Common myeloid progenitor, CD34-positive (primary cell): ENCODE measurements at regions of chr5 and their contacts with region 1.

Region 1: GRCh38 chr5:93607367-93608258 is 24.6 kb downstream of the NR2F1 start:
- DNase-seq: peak; percentile 67 to 82 (median 80)
- H3K4me3 ChIP-seq: no peak overlapping the region
- H3K27ac ChIP-seq: no peak overlapping the region
- H3K4me1 ChIP-seq: no peaks in the 10 kb centered on the region
- H3K27me3 ChIP-seq: peaks cover 45 to 99% (median 79%) of the 10 kb centered on the region in 5 experiments

Region 2: DNA sequence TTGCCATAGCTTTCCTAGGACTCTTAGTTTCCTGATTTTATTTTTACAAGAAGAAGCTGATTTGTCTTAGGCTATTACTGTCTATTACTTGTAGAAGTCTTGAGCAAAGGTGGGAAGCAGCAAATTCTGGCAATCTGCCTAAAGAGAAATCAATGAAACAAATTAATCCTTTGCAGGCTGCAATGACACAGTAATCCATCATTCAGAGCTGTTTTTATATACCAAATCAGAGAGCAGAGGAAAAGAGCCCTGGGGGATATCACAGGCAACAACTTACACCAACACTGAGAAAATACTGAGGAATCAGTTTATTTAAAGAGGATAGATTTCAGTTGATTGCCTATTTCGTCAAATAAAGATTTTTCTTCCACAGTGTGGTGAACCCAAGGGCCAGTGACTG is 40.2 kb before region 1 on chr5:
- CTCF ChIA-PET with region 1: no interaction called
- POLR2A ChIA-PET with region 1: no interaction called
- DNase-seq: no peak
- H3K4me3 ChIP-seq: no peak overlapping the region
- H3K27ac ChIP-seq: no peak overlapping the region
- H3K4me1 ChIP-seq: peaks cover 0 to 19% (median 12%) of the 10 kb centered on the region in 4 experiments
- H3K27me3 ChIP-seq: peaks cover 34 to 74% (median 58%) of the 10 kb centered on the region in 5 experiments

Region 3: DNA sequence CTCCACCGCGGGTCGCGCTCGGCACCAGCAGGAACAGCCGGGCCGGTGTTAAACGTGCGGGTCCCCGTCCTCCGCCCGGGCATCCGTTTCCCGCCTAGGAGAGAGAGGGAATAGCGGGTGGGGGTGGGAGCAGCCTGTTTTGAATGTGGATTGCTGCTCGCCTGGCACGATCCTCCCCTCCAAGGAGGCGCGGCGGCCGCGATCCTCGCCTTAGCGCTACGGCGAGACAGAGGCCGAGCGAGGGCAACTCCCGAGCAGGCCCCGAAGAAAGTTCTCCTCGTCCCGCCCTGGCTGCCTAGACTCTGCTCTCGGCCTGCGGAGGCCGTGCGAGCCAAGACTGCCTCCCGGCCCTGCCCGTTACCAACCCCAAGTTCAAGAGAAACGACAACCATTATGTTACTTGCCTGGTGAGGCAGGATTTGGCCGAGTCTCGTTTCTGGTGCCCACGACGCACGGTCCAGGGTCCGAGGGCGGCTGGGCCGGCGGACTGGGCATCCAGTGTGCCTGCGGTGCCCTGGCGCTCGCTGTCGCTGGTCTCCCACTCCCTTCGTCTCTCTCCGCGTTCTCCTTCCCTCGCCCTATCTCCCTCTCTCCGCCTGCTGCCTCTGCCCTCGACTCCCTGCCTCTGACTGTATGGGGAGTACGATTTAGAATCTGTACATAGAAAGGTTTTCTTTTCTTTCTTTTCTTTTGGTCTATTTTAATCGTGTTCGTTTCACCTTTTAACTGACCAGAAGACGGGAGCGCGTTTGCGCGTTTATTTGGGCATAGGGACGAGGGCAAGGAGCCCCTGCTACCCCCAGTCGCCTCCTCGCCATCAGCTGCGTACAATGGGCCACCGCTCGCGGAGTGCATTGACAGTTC is 27.3 kb before region 1 on chr5:
- CTCF ChIA-PET with region 1: interaction called, 26 read pairs
- POLR2A ChIA-PET with region 1: no interaction called
- DNase-seq: peak in 2 of 3 donors; percentile 16 to 24
- H3K4me3 ChIP-seq: peak overlapping the region in 5 of 7 experiments; percentile 11 to 52 (median 45)
- H3K27ac ChIP-seq: no peak overlapping the region
- H3K4me1 ChIP-seq: peaks cover 0 to 40% (median 35%) of the 10 kb centered on the region in 4 experiments
- H3K27me3 ChIP-seq: peaks cover 36 to 92% (median 54%) of the 10 kb centered on the region in 5 experiments

Region 4: GRCh38 chr5:93596676-93597461 is 10.7 kb before region 1 on chr5:
- CTCF ChIA-PET with region 1: interaction called, 12 read pairs
- POLR2A ChIA-PET with region 1: no interaction called
- DNase-seq: peak in 1 of 3 donors; percentile 40
- H3K4me3 ChIP-seq: no peak overlapping the region
- H3K27ac ChIP-seq: no peak overlapping the region
- H3K4me1 ChIP-seq: peaks cover 0 to 3% (median 1%) of the 10 kb centered on the region in 4 experiments
- H3K27me3 ChIP-seq: peaks cover 46 to 100% (median 73%) of the 10 kb centered on the region in 5 experiments

Region 5: GRCh38 chr5:93620487-93621326 is 13.1 kb after region 1 on chr5:
- CTCF ChIA-PET with region 1: interaction called, 22 read pairs
- POLR2A ChIA-PET with region 1: interaction called, 3 read pairs
- DNase-seq: peak in 2 of 3 donors; percentile 64 to 74
- H3K4me3 ChIP-seq: peak overlapping the region in 6 of 7 experiments; percentile 37 to 81 (median 65)
- H3K27ac ChIP-seq: no peak overlapping the region
- H3K4me1 ChIP-seq: peaks cover 0 to 12% (median 11%) of the 10 kb centered on the region in 4 experiments
- H3K27me3 ChIP-seq: peaks cover 11 to 80% (median 39%) of the 10 kb centered on the region in 5 experiments

Region 6: GRCh38 chr5:93705896-93706295 is 98.3 kb after region 1 on chr5:
- CTCF ChIA-PET with region 1: no interaction called
- POLR2A ChIA-PET with region 1: no interaction called
- DNase-seq: no peak
- H3K4me3 ChIP-seq: no peak overlapping the region
- H3K27ac ChIP-seq: no peak overlapping the region
- H3K4me1 ChIP-seq: no peaks in the 10 kb centered on the region
- H3K27me3 ChIP-seq: no peaks in the 10 kb centered on the region

Region 7: GRCh38 chr5:93800988-93801811 is 193.6 kb after region 1 on chr5:
- CTCF ChIA-PET with region 1: interaction called, 26 read pairs
- POLR2A ChIA-PET with region 1: no interaction called
- DNase-seq: peak; percentile 52 to 75 (median 71)
- H3K4me3 ChIP-seq: no peak overlapping the region
- H3K27ac ChIP-seq: no peak overlapping the region
- H3K4me1 ChIP-seq: peaks cover 0 to 4% (median 0%) of the 10 kb centered on the region in 4 experiments
- H3K27me3 ChIP-seq: peaks cover 0 to 3% (median 0%) of the 10 kb centered on the region in 5 experiments